ENCODE measurements at regions of chr1 and their contacts with region 1.

Region 1: GRCh38 chr1:209747580-209748262 is 8.1 kb upstream of the TRAF3IP3 start:
- DNase-seq: peak; percentile 97
- H3K4me3 ChIP-seq: peak overlapping the region in 2 of 4 donors; percentile 13 to 36
- H3K27ac ChIP-seq: peak overlapping the region; percentile 11 to 51 (median 18)
- H3K4me1 ChIP-seq: peaks cover 0 to 7% (median 2%) of the 10 kb centered on the region in 4 donors
- H3K27me3 ChIP-seq: no peaks in the 10 kb centered on the region
- CTCF ChIP-seq: peak; percentile 85 to 99 (median 92)
- EP300 ChIP-seq: no peak
- POLR2A ChIP-seq: no peak

Region 2: GRCh38 chr1:209733409-209734192 is 14.1 kb before region 1 on chr1:
- in situ Hi-C with region 1: no loop called
- intact Hi-C with region 1: loop called (anchors 1 kb)
- DNase-seq: no peak
- H3K4me3 ChIP-seq: no peak overlapping the region
- H3K27ac ChIP-seq: no peak overlapping the region
- H3K4me1 ChIP-seq: no peaks in the 10 kb centered on the region
- H3K27me3 ChIP-seq: no peaks in the 10 kb centered on the region
- CTCF ChIP-seq: no peak
- EP300 ChIP-seq: no peak
- POLR2A ChIP-seq: no peak

Region 3: GRCh38 chr1:209815931-209816341 is 68.2 kb after region 1 on chr1:
- in situ Hi-C with region 1: no loop called
- intact Hi-C with region 1: no loop called
- DNase-seq: no peak
- H3K4me3 ChIP-seq: no peak overlapping the region
- H3K27ac ChIP-seq: no peak overlapping the region
- H3K4me1 ChIP-seq: no peaks in the 10 kb centered on the region
- H3K27me3 ChIP-seq: peaks cover 5% of the 10 kb centered on the region
- CTCF ChIP-seq: no peak
- EP300 ChIP-seq: no peak
- POLR2A ChIP-seq: no peak

Measured in transverse colon (tissue), 4 donors.